ENCODE measurements at regions of chr4 and their contacts with region 1.

Region 1: GRCh38 chr4:184460499-184461285 is 13.7 kb downstream of the IRF2 start:
- DNase-seq: no peak
- ATAC-seq: no peak
- H3K4me3 ChIP-seq: no peak overlapping the region
- H3K27ac ChIP-seq: no peak overlapping the region
- H3K4me1 ChIP-seq: peaks cover 38% of the 10 kb centered on the region
- H3K27me3 ChIP-seq: no peaks in the 10 kb centered on the region
- CTCF ChIP-seq: no peak
- EP300 ChIP-seq: no peak
- POLR2A ChIP-seq: no peak
- RAD21 ChIP-seq: no peak

Region 2: GRCh38 chr4:184439856-184440594 is 20.7 kb before region 1 on chr4:
- CTCF ChIA-PET with region 1: no interaction called
- POLR2A ChIA-PET with region 1: interaction called, 8 read pairs
- in situ Hi-C with region 1: no loop called
- intact Hi-C with region 1: loop called (anchors 2 kb)
- DNase-seq: peak; percentile 79
- ATAC-seq: peak; percentile 94
- H3K4me3 ChIP-seq: peak overlapping the region; percentile 51 to 70 (median 55)
- H3K27ac ChIP-seq: peak overlapping the region; percentile 84
- H3K4me1 ChIP-seq: peaks cover 63% of the 10 kb centered on the region
- H3K27me3 ChIP-seq: no peaks in the 10 kb centered on the region
- CTCF ChIP-seq: 0 out of 2 replicates have a peak, but pooled peaks have one; percentile 2
- EP300 ChIP-seq: peak in 1 of 2 experiments; percentile 55; a peak in 2 of 4 replicates
- POLR2A ChIP-seq: peak in 1 of 2 experiments; percentile 58; a peak in 3 of 4 replicates
- RAD21 ChIP-seq: peak; percentile 25; the same call in 1 of the 2 replicates

Region 3: DNA sequence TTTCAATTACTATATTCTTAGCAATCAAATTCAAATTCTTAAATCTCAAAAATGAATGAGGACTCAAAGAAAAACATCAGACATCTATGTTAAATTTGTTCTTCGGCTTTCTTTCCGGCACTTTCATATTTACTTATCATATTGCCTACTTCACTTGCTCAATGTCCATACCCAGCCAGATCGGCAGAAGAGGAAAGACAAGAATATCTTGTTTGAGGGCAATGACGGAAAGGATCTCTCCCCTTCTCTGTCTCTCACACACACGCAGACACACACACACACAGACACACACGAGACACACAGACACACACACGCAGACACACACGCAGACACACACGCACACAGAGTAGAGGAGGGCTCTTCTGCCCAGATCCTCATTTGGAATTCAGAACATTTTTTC is 26.8 kb after region 1 on chr4:
- CTCF ChIA-PET with region 1: no interaction called
- POLR2A ChIA-PET with region 1: no interaction called
- in situ Hi-C with region 1: no loop called
- intact Hi-C with region 1: no loop called
- DNase-seq: no peak
- ATAC-seq: no peak
- H3K4me3 ChIP-seq: no peak overlapping the region
- H3K27ac ChIP-seq: no peak overlapping the region
- H3K4me1 ChIP-seq: peaks cover 17% of the 10 kb centered on the region; the same call in 1 of the 2 replicates
- H3K27me3 ChIP-seq: peaks cover 0 to 3% of the 10 kb centered on the region in 2 experiments; a peak in 1 of 5 replicates
- CTCF ChIP-seq: no peak
- EP300 ChIP-seq: no peak
- POLR2A ChIP-seq: no peak
- RAD21 ChIP-seq: no peak

Region 4: DNA sequence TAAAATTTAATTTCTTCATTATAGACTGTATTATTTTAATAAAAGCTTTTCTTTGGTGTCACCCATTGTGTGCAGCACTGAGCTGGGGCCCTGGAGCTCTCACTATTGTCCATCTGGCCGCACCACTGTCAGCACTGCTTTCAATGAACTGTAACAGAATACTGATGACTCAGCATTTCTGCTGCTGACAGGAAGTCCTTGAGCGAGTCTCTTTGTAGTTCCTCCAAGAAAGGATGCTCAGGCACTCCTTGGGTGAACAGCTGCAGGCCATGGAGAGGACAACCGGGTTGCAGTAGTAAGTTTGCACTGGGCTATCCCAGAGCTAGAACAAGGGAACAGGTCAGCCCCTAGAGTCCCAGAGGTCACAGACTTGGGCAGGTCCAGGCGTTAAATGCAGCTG is 1269.7 kb after region 1 on chr4:
- CTCF ChIA-PET with region 1: no interaction called
- POLR2A ChIA-PET with region 1: no interaction called
- in situ Hi-C with region 1: no loop called
- intact Hi-C with region 1: loop called (anchors 10 kb)
- DNase-seq: no peak
- ATAC-seq: no peak
- H3K4me3 ChIP-seq: no peak overlapping the region
- H3K27ac ChIP-seq: no peak overlapping the region
- H3K4me1 ChIP-seq: 0 out of 2 replicates have a peak, but pooled peaks cover under 1% of the 10 kb centered on the region
- H3K27me3 ChIP-seq: no peaks in the 10 kb centered on the region
- CTCF ChIP-seq: no peak
- EP300 ChIP-seq: no peak
- POLR2A ChIP-seq: no peak
- RAD21 ChIP-seq: no peak